Ovary (tissue), 10 donors: ENCODE measurements at regions of chr9 and their contacts with region 1.

Region 1: DNA sequence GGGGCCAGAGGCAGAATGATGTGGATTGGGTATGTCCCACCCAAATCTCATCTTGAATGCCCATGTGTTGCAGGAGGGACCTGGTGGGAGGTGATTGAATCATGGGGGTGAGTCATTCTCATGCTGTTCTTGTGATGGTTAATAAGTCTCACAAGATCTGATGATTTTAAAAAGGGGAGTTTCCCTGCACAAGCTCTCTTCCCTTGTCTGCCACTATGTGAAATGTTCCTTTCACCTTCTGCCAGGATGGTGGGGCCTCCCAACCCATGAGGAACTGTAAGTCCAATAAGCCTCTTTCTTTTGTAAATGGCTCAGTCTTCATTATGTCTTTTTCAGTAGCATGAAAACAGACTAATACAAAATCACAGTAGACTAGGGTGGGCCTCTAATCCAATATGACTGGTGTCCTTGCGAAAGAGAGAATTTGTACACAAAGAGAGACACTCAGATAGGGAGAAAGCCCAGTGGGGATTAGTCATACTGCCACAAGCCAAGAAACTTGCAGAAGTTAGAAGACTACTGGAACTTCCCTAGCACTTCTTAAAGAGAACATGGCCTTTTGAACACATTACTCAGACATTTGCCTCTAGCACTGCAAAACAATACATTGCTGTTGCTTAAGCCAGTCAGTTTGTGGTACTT is 68.4 kb downstream of the ANXA1 start:
- DNase-seq: no peak
- H3K4me3 ChIP-seq: no peak overlapping the region
- H3K27ac ChIP-seq: no peak overlapping the region
- H3K4me1 ChIP-seq: no peaks in the 10 kb centered on the region
- H3K27me3 ChIP-seq: no peaks in the 10 kb centered on the region
- CTCF ChIP-seq: no peak
- EP300 ChIP-seq: no peak
- POLR2A ChIP-seq: no peak

Region 2: GRCh38 chr9:73162987-73163768 is 56.9 kb before region 1 on chr9:
- intact Hi-C with region 1: no loop called
- DNase-seq: no peak
- H3K4me3 ChIP-seq: no peak overlapping the region
- H3K27ac ChIP-seq: no peak overlapping the region
- H3K4me1 ChIP-seq: no peaks in the 10 kb centered on the region
- H3K27me3 ChIP-seq: no peaks in the 10 kb centered on the region
- CTCF ChIP-seq: no peak
- EP300 ChIP-seq: no peak
- POLR2A ChIP-seq: no peak

Region 3: GRCh38 chr9:73243078-73243477 is 23.0 kb after region 1 on chr9:
- intact Hi-C with region 1: loop called in 1 of 4 experiments (anchors 2 kb)
- DNase-seq: no peak
- H3K4me3 ChIP-seq: no peak overlapping the region
- H3K27ac ChIP-seq: no peak overlapping the region
- H3K4me1 ChIP-seq: no peaks in the 10 kb centered on the region
- H3K27me3 ChIP-seq: no peaks in the 10 kb centered on the region
- CTCF ChIP-seq: no peak
- EP300 ChIP-seq: no peak
- POLR2A ChIP-seq: no peak